Gastrocnemius medialis (tissue), 4 donors: ENCODE measurements at regions of chr1 and their contacts with region 1.

Region 1: DNA sequence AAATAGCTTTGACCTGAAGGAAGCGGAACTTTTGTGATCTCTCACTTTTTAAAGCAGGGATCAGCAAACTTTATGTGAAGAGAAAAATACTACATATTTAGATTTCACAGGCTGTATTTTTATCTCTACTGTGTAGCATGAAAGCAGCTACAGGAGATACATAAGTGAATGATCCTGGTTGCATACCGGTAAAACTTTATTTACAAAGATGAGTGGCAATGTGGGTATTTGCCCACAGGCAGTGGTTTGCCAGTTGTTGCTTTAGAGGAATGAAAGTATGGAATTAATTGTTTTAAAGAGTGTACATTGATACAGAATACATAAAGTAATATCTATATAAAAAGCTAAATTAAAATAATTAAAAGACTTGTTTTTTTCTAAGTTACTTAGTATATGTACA is 17.8 kb downstream of the ODR4 start:
- DNase-seq: no peak
- ATAC-seq: no peak
- H3K4me3 ChIP-seq: no peak overlapping the region
- H3K27ac ChIP-seq: no peak overlapping the region
- H3K4me1 ChIP-seq: no peaks in the 10 kb centered on the region
- H3K27me3 ChIP-seq: no peaks in the 10 kb centered on the region
- CTCF ChIP-seq: no peak
- POLR2A ChIP-seq: no peak

Region 2: DNA sequence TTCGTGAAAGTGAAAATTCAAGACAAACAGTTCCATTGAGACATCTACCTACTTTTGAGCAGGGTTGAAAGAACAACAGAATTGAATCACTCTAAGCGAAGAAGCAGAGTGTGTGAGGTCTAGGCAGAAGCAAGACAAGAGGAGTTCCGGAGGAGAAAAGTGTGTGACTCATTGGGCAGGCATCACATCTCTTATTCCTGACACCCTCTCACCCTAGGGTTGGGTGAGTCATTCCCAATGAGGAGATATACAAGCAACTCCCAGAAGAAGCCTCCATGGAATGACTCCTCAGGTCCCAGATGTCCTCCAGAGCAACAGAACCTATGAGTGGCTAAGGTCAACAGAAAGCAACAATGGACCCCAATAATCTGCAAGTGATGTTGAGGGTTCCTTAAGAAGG is 156.6 kb before region 1 on chr1:
- in situ Hi-C with region 1: no loop called
- intact Hi-C with region 1: no loop called
- DNase-seq: no peak
- ATAC-seq: no peak
- H3K4me3 ChIP-seq: no peak overlapping the region
- H3K27ac ChIP-seq: no peak overlapping the region
- H3K4me1 ChIP-seq: no peaks in the 10 kb centered on the region
- H3K27me3 ChIP-seq: no peaks in the 10 kb centered on the region
- CTCF ChIP-seq: no peak
- POLR2A ChIP-seq: no peak

Region 3: GRCh38 chr1:186330758-186331157 is 62.7 kb before region 1 on chr1:
- in situ Hi-C with region 1: no loop called
- intact Hi-C with region 1: loop called (anchors 2 kb)
- DNase-seq: no peak
- ATAC-seq: no peak
- H3K4me3 ChIP-seq: no peak overlapping the region
- H3K27ac ChIP-seq: no peak overlapping the region
- H3K4me1 ChIP-seq: no peaks in the 10 kb centered on the region
- H3K27me3 ChIP-seq: no peaks in the 10 kb centered on the region
- CTCF ChIP-seq: peak in 1 of 5 experiments; percentile 22
- POLR2A ChIP-seq: no peak

Region 4: DNA sequence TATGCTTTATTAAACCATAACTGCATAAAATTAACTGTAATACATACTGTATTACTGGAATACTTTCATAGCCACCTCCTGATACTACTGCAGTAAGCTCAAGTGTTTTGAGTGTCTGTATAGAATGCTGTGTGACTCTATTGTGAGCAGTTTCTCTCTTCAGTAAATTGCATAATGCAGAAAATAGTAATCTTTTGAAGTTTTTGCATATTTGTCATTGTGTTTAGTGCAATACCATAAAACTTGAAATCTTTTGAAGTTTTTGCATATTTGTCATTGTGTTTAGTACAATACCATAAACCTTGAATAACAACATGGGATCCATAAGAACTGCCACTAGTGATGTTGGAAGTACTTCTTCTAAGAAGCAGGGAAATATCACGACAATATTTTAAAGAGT is 29.6 kb before region 1 on chr1:
- in situ Hi-C with region 1: no loop called
- intact Hi-C with region 1: loop called (anchors 2 kb)
- DNase-seq: no peak
- ATAC-seq: no peak
- H3K4me3 ChIP-seq: no peak overlapping the region
- H3K27ac ChIP-seq: no peak overlapping the region
- H3K4me1 ChIP-seq: no peaks in the 10 kb centered on the region
- H3K27me3 ChIP-seq: no peaks in the 10 kb centered on the region
- CTCF ChIP-seq: no peak
- POLR2A ChIP-seq: no peak